CD8-positive, alpha-beta T cell (primary cell): ENCODE measurements at regions of chr11 and their contacts with region 1.

Region 1: GRCh38 chr11:73982969-73983740 is 512 bp upstream of the UCP2 start:
- DNase-seq: peak; percentile 83 to 97 (median 92)
- ATAC-seq: peak; percentile 77
- H3K4me3 ChIP-seq: peak overlapping the region; percentile 78 to 100
- H3K4me3 Mint-ChIP-seq: peak overlapping the region; percentile 100
- H3K27ac ChIP-seq: peak overlapping the region; percentile 95 to 99
- H3K27ac Mint-ChIP-seq: peak overlapping the region; percentile 99
- H3K4me1 ChIP-seq: peaks cover 36% of the 10 kb centered on the region
- H3K4me1 Mint-ChIP-seq: peaks cover 48% of the 10 kb centered on the region
- H3K27me3 ChIP-seq: no peaks in the 10 kb centered on the region
- H3K27me3 Mint-ChIP-seq: no peaks in the 10 kb centered on the region
- CTCF ChIP-seq: no peak

Region 2: GRCh38 chr11:73760679-73761402 is 222.3 kb before region 1 on chr11 and contains the start of gene RAB6A:
- CTCF ChIA-PET with region 1: interaction called, 3 read pairs
- POLR2A ChIA-PET with region 1: no interaction called
- intact Hi-C with region 1: loop called in 1 of 2 experiments (anchors 1 kb)
- DNase-seq: peak; percentile 99 to 100 (median 99)
- ATAC-seq: peak; percentile 93
- H3K4me3 ChIP-seq: peak within 1 kb of the TSS; percentile 69 to 93
- H3K4me3 Mint-ChIP-seq: peak within 1 kb of the TSS; percentile 85
- H3K27ac ChIP-seq: peak within 1 kb of the TSS; percentile 71 to 90
- H3K27ac Mint-ChIP-seq: peak within 1 kb of the TSS; percentile 95
- H3K4me1 ChIP-seq: peaks cover 17% of the 10 kb centered on the region
- H3K4me1 Mint-ChIP-seq: peaks cover 29% of the 10 kb centered on the region
- H3K27me3 ChIP-seq: no peaks in the 10 kb centered on the region
- H3K27me3 Mint-ChIP-seq: no peaks in the 10 kb centered on the region
- CTCF ChIP-seq: peak; percentile 24
- total RNA-seq, gene RAB6A: 43.7 to 53.3 TPM

Region 3: GRCh38 chr11:73965076-73965860 is 17.9 kb before region 1 on chr11:
- CTCF ChIA-PET with region 1: interaction called, 23 read pairs
- POLR2A ChIA-PET with region 1: interaction called, 283 read pairs
- intact Hi-C with region 1: loop called in 1 of 2 experiments (anchors 1 kb)
- DNase-seq: peak in 2 of 9 experiments; percentile 8 to 14
- ATAC-seq: no peak
- H3K4me3 ChIP-seq: no peak overlapping the region
- H3K4me3 Mint-ChIP-seq: no peak overlapping the region
- H3K27ac ChIP-seq: no peak overlapping the region
- H3K27ac Mint-ChIP-seq: peak overlapping the region; percentile 78
- H3K4me1 ChIP-seq: peaks cover 51% of the 10 kb centered on the region
- H3K4me1 Mint-ChIP-seq: peaks cover 44% of the 10 kb centered on the region
- H3K27me3 ChIP-seq: no peaks in the 10 kb centered on the region
- H3K27me3 Mint-ChIP-seq: no peaks in the 10 kb centered on the region
- CTCF ChIP-seq: no peak

Region 4: GRCh38 chr11:73995247-73995646 is 12.1 kb after region 1 on chr11:
- CTCF ChIA-PET with region 1: interaction called, 32 read pairs
- POLR2A ChIA-PET with region 1: interaction called, 116 read pairs
- intact Hi-C with region 1: loop called (anchors 1 kb)
- DNase-seq: peak in 2 of 9 experiments; percentile 81 to 92
- ATAC-seq: peak; percentile 75
- H3K4me3 ChIP-seq: peak overlapping the region; percentile 1 to 28
- H3K4me3 Mint-ChIP-seq: peak overlapping the region; percentile 74
- H3K27ac ChIP-seq: peak overlapping the region; percentile 87 to 98
- H3K27ac Mint-ChIP-seq: peak overlapping the region; percentile 94
- H3K4me1 ChIP-seq: peaks cover 72% of the 10 kb centered on the region
- H3K4me1 Mint-ChIP-seq: peaks cover 73% of the 10 kb centered on the region
- H3K27me3 ChIP-seq: no peaks in the 10 kb centered on the region
- H3K27me3 Mint-ChIP-seq: no peaks in the 10 kb centered on the region
- CTCF ChIP-seq: no peak

Region 5: DNA sequence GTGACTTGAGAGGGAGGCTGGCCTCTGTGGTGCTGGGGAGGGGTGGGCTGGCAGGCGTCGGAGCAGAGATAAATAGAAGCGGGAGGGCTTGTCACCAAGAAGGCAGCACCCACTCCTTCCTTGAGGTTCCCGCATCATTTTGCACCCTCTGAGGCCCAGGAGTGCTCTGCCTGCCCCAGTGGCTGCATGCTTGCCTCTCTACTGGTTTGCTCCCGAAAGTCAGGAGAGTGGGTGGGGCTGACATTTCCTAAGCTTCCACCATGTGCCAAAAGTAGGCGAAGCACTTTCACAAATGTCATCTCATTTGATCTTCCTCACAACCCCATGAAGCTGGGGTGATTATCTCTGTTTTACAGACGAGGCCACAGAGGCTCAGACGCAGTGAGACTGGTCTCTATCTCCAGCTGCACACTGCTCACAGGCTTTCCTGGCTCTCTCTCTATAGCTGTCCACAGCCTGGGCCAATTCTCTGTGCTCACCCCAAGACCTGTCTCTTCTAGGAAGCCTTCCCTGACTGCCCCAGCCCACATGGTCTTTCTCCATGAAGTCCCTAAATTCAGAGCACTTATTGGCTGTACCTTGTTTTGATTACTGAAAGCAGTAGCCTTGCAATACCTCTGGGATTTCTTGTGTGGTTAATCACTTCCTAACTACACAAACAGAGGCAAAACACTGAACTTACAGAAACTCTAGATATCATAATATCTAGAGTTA is 28.4 kb after region 1 on chr11:
- CTCF ChIA-PET with region 1: interaction called, 24 read pairs
- POLR2A ChIA-PET with region 1: interaction called, 428 read pairs
- intact Hi-C with region 1: no loop called
- DNase-seq: peak in 3 of 9 experiments; percentile 27 to 74 (median 34)
- ATAC-seq: peak; percentile 55
- H3K4me3 ChIP-seq: no peak overlapping the region
- H3K4me3 Mint-ChIP-seq: peak overlapping the region; percentile 63
- H3K27ac ChIP-seq: peak overlapping the region; percentile 32 to 52
- H3K27ac Mint-ChIP-seq: peak overlapping the region; percentile 94
- H3K4me1 ChIP-seq: peaks cover 93% of the 10 kb centered on the region
- H3K4me1 Mint-ChIP-seq: peaks cover 88% of the 10 kb centered on the region
- H3K27me3 ChIP-seq: no peaks in the 10 kb centered on the region
- H3K27me3 Mint-ChIP-seq: no peaks in the 10 kb centered on the region
- CTCF ChIP-seq: no peak

Region 6: GRCh38 chr11:74112877-74113276 is 129.7 kb after region 1 on chr11:
- CTCF ChIA-PET with region 1: no interaction called
- POLR2A ChIA-PET with region 1: no interaction called
- intact Hi-C with region 1: no loop called
- DNase-seq: no peak
- ATAC-seq: no peak
- H3K4me3 ChIP-seq: no peak overlapping the region
- H3K4me3 Mint-ChIP-seq: no peak overlapping the region
- H3K27ac ChIP-seq: no peak overlapping the region
- H3K27ac Mint-ChIP-seq: no peak overlapping the region
- H3K4me1 ChIP-seq: no peaks in the 10 kb centered on the region
- H3K4me1 Mint-ChIP-seq: no peaks in the 10 kb centered on the region
- H3K27me3 ChIP-seq: no peaks in the 10 kb centered on the region
- H3K27me3 Mint-ChIP-seq: no peaks in the 10 kb centered on the region
- CTCF ChIP-seq: no peak

Region 7: GRCh38 chr11:74398244-74399159 is 415.3 kb after region 1 on chr11 and contains the start of gene PGM2L1:
- CTCF ChIA-PET with region 1: no interaction called
- POLR2A ChIA-PET with region 1: no interaction called
- intact Hi-C with region 1: loop called in 1 of 2 experiments (anchors 2 kb)
- DNase-seq: peak; percentile 85 to 97 (median 95)
- ATAC-seq: peak; percentile 86
- H3K4me3 ChIP-seq: peak within 1 kb of the TSS; percentile 51 to 92
- H3K4me3 Mint-ChIP-seq: peak within 1 kb of the TSS; percentile 99
- H3K27ac ChIP-seq: peak within 1 kb of the TSS; percentile 44 to 58
- H3K27ac Mint-ChIP-seq: peak within 1 kb of the TSS; percentile 96
- H3K4me1 ChIP-seq: peaks cover 10% of the 10 kb centered on the region
- H3K4me1 Mint-ChIP-seq: peaks cover 26% of the 10 kb centered on the region
- H3K27me3 ChIP-seq: no peaks in the 10 kb centered on the region
- H3K27me3 Mint-ChIP-seq: no peaks in the 10 kb centered on the region
- CTCF ChIP-seq: no peak
- total RNA-seq, gene PGM2L1: 5.2 to 5.8 TPM